Aorta (tissue), 5 donors: ENCODE measurements at regions of chr13 and their contacts with region 1.

Region 1: DNA sequence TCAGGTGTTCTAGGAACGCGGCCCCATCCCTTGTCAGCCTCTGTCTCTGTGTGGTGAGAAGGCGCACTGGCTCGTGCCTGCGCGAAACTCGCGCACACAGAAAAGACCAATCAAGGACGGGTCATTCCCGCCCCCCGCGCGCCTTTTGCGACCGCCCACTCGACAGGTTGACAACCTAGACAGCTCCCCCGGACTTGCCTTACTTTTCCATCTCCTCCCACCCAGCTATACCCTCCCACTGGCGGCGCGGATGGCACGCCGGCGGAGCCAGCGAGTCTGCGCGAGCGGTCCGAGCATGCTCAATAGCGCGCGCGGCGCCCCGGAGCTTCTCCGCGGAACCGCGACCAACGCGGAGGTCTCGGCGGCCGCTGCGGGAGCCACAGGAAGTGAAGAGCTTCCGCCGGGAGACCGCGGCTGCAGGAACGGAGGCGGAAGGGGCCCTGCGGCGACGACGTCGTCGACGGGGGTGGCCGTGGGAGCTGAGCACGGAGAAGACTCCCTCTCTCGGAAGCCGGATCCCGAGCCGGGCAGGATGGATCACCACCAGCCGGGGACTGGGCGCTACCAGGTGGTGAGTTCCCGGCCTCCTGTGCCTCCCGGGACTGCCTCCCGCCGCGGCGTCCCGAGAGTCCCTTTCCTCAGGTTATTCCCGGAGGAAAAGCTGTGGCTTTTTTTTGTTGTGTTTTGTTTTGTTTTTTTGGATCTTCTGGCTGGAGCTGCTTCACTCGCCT is at the start of gene NDFIP2:
- DNase-seq: peak; percentile 89 to 95
- ATAC-seq: peak; percentile 96
- H3K4me3 ChIP-seq: peak within 1 kb of the TSS; percentile 70 to 81
- H3K27ac ChIP-seq: peak within 1 kb of the TSS; percentile 11 to 18
- H3K4me1 ChIP-seq: no peaks in the 10 kb centered on the region
- H3K27me3 ChIP-seq: no peaks in the 10 kb centered on the region
- total RNA-seq, gene NDFIP2: 13.1 to 14.2 TPM

Region 2: GRCh38 chr13:79405829-79406596 is 75.1 kb before region 1 on chr13 and contains the start of gene RBM26:
- intact Hi-C with region 1: loop called in 1 of 2 experiments (anchors 5 kb)
- DNase-seq: peak; percentile 96 to 97
- ATAC-seq: peak; percentile 97
- H3K4me3 ChIP-seq: peak within 1 kb of the TSS; percentile 79 to 99
- H3K27ac ChIP-seq: peak within 1 kb of the TSS; percentile 57 to 87
- H3K4me1 ChIP-seq: peaks cover 3 to 6% of the 10 kb centered on the region in 2 donors
- H3K27me3 ChIP-seq: no peaks in the 10 kb centered on the region
- total RNA-seq, gene RBM26: 37.5 to 54.6 TPM

Region 3: GRCh38 chr13:79434556-79434955 is 46.6 kb before region 1 on chr13:
- intact Hi-C with region 1: loop called in 1 of 2 experiments (anchors 5 kb)
- DNase-seq: no peak
- ATAC-seq: no peak
- H3K4me3 ChIP-seq: no peak overlapping the region
- H3K27ac ChIP-seq: no peak overlapping the region
- H3K4me1 ChIP-seq: no peaks in the 10 kb centered on the region
- H3K27me3 ChIP-seq: no peaks in the 10 kb centered on the region